GM10248 (cell line): ENCODE measurements at regions of chr18 and their contacts with region 1.

Region 1: GRCh38 chr18:63320046-63320689 is 599 bp upstream of the BCL2 start:
- DNase-seq: peak; percentile 88
- CTCF ChIP-seq: peak; percentile 38

Region 2: DNA sequence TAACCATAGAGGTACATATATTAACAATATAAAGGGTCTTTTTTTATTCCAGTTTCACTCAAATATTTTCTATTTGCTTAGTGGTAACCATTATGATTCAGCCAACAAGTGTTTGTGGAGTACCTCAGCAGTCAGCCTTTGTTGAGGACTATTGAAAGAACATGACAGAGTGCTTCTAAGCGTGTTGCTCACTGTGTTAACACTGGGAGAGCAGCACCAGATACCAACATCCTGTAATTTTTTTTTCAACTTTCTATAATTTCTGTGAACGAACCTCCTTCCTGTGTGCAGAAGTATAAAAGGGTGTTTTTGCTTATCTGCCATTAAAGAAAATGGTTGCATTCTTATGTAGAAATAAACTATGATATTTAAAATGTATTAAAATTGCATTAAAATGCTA is 365.8 kb before region 1 on chr18:
- CTCF ChIA-PET with region 1: no interaction called
- POLR2A ChIA-PET with region 1: no interaction called
- DNase-seq: no peak
- CTCF ChIP-seq: no peak

Region 3: DNA sequence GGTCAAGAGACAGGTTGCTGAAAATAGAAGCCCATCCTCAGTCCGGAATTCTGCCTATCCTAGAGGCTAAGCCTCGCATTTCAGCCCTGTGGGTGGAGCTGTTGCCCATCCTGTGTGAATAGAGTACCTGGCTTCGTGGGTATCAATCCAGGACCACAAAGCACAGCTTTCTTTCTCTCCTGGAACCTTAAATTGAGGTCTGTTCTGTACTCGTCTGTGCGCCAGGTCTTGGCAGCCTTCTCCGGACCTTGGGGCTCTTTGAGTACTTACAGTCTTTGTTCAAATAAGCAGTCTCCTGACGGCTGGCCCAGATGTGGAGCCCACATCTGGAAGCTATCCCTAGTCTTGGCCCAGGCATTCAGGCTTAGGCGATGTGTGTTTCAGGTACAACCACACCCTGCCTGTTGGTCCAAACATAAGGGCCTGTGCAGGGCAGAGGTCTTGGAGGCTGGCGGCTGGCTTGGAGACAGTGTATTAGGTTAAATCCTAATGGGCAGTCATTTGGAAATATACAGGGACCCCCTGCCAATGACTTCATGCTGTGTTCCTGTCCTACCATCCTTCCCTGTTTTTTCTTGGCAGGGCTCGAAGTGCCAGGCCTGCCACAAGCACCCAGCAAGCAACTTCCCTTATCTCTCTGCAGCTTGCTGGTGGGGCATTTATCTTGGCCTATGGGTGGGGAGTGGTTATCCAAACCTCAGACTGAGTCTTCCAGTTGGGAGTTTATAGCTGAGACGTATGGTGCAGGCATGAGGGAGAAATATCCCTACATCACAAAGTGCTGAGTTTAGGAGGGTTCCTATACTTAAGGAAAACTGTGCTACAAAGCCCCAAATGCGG is 294.7 kb before region 1 on chr18:
- CTCF ChIA-PET with region 1: interaction called, 109 read pairs
- POLR2A ChIA-PET with region 1: no interaction called
- DNase-seq: no peak
- CTCF ChIP-seq: peak; percentile 36

Region 4: GRCh38 chr18:63054901-63055584 is 265.1 kb before region 1 on chr18:
- CTCF ChIA-PET with region 1: no interaction called
- POLR2A ChIA-PET with region 1: no interaction called
- DNase-seq: no peak
- CTCF ChIP-seq: no peak

Region 5: DNA sequence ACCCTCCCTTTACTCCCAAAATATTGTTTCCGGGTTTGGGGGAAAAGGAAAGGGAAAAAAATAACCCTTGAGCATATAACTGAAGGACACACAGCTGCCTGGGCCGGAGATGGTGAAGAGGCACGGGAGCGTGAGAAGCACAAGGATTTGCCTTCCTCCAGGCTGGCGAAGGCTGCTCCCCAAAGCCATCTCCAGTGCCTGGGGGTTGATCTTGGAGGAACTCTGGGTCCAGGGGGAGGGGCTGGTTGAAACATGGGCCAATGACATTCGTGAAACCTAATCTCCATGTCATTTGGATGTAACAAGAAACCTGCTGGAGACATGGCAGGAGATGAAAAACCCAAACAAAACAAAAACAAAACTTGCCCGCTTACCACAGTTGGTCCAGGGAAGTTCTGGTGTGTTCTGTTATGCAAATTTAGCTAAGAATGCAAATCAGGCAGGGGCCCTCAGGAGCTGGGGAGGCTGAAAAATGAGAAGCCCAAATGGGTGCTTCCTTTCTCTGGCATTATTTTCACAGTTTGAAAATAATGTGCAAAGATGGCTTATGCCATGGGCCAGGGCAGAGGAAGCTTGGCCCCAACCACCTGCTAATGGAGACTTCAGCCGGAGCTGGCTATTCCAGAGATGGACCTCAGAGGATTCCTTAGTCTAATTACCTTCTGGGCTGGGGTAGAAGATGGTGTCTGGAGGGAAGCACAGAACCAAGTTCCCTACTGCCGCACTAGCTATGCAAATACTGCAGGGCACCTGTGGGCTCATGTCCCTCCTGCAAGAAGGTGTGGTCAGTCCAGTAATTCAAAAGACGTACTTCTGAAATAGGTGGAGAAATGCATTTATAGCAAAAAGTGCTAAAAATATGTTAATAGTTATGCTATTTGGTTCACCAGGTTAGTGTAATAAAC is 181.5 kb before region 1 on chr18:
- CTCF ChIA-PET with region 1: interaction called, 43 read pairs
- POLR2A ChIA-PET with region 1: interaction called, 5 read pairs
- DNase-seq: peak; percentile 51
- CTCF ChIP-seq: no peak

Region 6: DNA sequence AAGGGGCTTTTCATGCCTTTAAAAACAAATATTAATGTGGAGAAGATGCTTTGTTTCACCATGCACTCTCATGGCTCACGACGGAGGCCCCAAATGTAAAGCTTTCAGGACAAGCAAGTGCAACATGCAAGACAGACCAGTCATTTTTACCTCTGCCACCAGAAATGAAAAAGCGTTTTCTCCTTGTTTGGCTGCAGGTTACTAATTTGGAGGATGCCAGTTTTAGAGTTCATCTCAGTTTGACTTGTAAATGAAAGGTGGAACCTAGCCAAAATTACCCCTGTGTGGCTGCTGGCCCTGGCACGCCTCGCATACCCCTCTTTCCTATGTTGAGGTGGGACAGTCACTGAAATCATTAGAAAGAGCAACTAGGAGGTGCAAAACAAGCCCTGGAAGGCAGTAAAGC is 139.2 kb before region 1 on chr18:
- CTCF ChIA-PET with region 1: interaction called, 17 read pairs
- POLR2A ChIA-PET with region 1: no interaction called
- DNase-seq: peak; percentile 37
- CTCF ChIP-seq: no peak

Region 7: DNA sequence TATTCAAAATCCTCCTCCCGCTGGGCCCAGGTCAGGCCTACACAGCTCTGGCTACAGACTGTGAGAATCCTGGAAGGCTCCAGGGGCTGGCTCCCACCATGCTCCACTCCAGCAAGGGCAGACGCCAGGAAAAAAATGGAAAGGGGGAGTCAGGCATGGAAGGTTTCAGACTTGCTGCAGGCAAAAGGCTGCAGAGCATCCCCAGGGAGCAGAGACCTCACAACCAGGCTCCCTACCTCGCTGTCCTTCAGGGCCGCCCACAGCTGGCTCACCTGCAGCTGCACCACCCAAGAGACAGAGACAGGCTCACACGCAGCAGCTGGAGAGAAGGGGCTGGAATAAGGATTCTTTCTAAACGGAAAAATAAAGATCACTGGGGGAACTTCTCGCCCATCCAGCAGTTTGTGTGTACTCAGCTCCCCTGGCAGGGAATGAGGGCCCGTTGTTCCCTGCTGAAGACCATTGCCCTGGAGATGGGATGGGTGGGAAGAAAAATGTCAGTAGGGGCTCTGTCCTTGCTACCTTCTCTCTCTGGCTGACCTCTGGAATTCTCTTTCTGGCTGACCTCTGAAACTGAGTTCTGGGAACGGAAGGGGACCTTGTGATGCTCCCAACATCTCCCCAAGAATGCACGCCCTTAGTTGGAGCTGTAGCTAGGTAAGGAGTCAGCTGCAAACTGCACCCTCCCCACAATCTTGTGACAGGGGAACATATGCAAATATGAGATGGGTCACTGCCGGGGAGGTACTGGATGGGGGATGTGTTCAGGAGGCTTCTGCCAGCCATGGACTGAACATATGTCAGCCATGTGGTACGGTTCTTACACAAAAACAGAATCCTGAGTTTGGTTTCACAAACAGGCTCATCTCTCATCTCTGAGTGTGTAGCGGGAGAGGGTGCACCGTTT is 35.1 kb before region 1 on chr18:
- CTCF ChIA-PET with region 1: interaction called, 24 read pairs
- POLR2A ChIA-PET with region 1: no interaction called
- DNase-seq: peak; percentile 55
- CTCF ChIP-seq: no peak

Region 8: GRCh38 chr18:63339920-63340484 is 19.8 kb after region 1 on chr18:
- CTCF ChIA-PET with region 1: interaction called, 33 read pairs
- POLR2A ChIA-PET with region 1: no interaction called
- DNase-seq: no peak
- CTCF ChIP-seq: peak; percentile 28